Left ventricle myocardium superior (tissue), 1 donor: ENCODE measurements at regions of chr6 and their contacts with region 1.

Region 1: GRCh38 chr6:50816115-50816675 is 2.5 kb upstream of the TFAP2B start:
- DNase-seq: peak; percentile 48
- ATAC-seq: peak; percentile 33

Region 2: GRCh38 chr6:51959744-51960383 is 1143.7 kb after region 1 on chr6:
- intact Hi-C with region 1: loop called (anchors 5 kb)
- DNase-seq: peak; percentile 56
- ATAC-seq: no peak

Region 3: DNA sequence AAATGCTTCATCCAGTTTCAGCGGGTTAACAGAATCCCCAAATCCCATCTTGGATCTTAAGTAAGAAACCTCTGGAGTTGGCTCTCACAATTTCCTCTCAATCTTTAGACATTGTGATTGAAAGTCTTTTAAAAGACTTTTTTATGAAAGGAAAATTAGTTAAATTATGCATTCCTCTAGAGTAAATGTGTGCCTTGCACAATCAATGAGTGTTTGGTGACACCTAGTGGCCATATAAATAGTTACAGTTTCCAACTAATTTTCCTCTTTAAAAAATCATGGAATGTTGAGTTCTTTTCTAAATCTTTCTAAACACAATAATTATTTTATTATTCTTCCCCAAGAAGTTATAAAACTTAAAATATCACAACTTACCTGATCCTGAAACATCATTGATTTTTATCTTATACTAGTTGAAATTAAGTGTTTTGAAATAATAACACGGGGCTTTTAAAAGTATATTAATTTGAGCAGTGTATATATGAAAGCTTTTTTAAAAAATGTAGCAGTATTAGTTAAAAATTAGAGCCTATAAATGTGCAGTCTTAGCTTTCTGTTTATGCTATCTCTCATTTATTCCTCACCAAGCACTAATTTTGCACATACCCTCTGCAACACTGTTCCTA is 1204.9 kb after region 1 on chr6:
- intact Hi-C with region 1: loop called (anchors 10 kb)
- DNase-seq: no peak
- ATAC-seq: no peak